GM12878 (cell line): ENCODE measurements at regions of chr12 and their contacts with region 1.

Region 1: DNA sequence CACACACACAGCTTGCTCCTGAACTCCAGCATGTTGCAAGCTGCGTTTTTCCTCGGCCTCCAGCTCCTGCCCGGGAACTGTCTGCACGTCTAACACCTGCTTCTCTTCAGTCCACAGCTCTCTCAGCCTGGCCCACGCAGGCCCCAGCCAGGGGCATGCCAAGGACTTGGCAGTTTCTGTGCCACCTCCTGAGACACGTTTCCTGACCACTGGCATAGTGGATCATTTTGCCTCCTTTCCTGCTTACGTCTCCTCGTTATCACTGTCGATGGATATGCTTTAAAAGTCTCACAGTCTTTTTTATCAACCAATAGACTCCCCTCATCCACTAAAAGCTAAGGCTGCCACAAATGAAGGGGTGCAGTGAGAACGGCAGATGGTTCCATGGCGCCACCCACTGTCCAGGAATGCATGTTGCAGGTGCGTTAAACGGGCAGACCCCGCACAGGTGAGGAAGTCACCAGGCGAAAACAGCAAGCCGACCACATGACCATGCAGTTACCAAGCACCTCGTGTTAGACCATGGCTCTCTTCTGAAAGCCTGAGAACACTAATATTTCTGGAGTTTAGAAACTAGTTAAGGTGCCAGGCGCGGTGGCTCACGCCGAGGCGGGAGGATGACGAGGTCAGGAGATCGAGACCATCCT is 14.7 kb upstream of the TEAD4 start:
- DNase-seq: peak; percentile 15
- ATAC-seq: peak; percentile 89
- H3K4me3 ChIP-seq: no peak overlapping the region
- H3K27ac ChIP-seq: no peak overlapping the region
- H3K4me1 ChIP-seq: no peaks in the 10 kb centered on the region
- H3K27me3 ChIP-seq: no peaks in the 10 kb centered on the region
- CTCF ChIP-seq: peak; percentile 79 to 83 (median 81)
- EP300 ChIP-seq: no peak
- POLR2A ChIP-seq: no peak
- RAD21 ChIP-seq: peak; percentile 76

Region 2: DNA sequence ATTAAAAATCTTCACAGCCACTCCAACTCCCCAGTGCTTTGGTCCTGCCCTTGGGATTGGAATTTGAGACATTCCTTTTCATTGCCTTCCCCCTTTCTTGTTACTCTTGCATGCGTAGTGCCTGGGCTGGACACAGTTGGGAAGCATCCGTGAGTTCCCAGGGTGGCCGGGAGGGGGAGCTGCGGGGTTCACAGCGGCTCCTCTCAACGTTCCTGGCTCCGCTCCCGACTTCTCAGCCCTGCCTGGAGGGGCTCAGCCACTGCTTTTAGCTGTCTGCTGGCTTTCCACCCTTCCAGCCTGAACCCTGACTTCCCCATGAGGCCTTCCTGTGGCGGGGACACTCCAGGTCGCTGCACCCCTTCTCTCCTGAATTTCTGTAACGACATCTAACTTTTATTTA is 90.9 kb before region 1 on chr12:
- CTCF ChIA-PET with region 1: interaction called, 24 read pairs
- POLR2A ChIA-PET with region 1: no interaction called
- RAD21 ChIA-PET with region 1: no interaction called
- SMC1A ChIA-PET with region 1: interaction called, 6 read pairs
- in situ Hi-C with region 1: no loop called
- intact Hi-C with region 1: loop called (anchors 1 kb)
- DNase-seq: no peak
- ATAC-seq: peak; percentile 90
- H3K4me3 ChIP-seq: no peak overlapping the region
- H3K27ac ChIP-seq: no peak overlapping the region
- H3K4me1 ChIP-seq: no peaks in the 10 kb centered on the region
- H3K27me3 ChIP-seq: no peaks in the 10 kb centered on the region
- CTCF ChIP-seq: peak; percentile 54 to 85 (median 68)
- EP300 ChIP-seq: no peak
- POLR2A ChIP-seq: no peak
- RAD21 ChIP-seq: peak; percentile 43

Region 3: DNA sequence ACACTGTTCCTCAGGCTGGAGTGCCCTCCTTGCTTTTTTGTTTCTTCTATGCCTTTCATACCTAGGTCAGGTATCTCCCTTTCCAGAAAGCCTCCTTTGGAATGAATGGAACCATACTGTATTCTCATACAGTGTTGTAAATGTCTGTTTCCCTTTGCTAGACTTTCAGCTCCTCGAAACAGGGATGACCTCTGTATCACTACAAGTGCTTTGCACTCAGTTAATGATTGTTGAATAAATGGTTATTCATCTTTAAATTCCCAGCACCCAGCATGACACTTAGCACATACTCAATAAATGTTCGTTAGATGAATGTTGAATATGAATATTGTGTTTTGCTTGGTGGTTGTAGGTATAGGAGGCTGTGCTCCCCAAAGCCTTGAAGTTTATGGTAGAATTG is 59.7 kb before region 1 on chr12:
- CTCF ChIA-PET with region 1: interaction called, 11 read pairs
- POLR2A ChIA-PET with region 1: no interaction called
- RAD21 ChIA-PET with region 1: interaction called, 10 read pairs
- SMC1A ChIA-PET with region 1: interaction called, 4 read pairs
- in situ Hi-C with region 1: no loop called
- intact Hi-C with region 1: no loop called
- DNase-seq: no peak
- ATAC-seq: peak; percentile 21
- H3K4me3 ChIP-seq: no peak overlapping the region
- H3K27ac ChIP-seq: no peak overlapping the region
- H3K4me1 ChIP-seq: no peaks in the 10 kb centered on the region
- H3K27me3 ChIP-seq: no peaks in the 10 kb centered on the region
- CTCF ChIP-seq: no peak
- EP300 ChIP-seq: no peak
- POLR2A ChIP-seq: no peak
- RAD21 ChIP-seq: no peak

Region 4: DNA sequence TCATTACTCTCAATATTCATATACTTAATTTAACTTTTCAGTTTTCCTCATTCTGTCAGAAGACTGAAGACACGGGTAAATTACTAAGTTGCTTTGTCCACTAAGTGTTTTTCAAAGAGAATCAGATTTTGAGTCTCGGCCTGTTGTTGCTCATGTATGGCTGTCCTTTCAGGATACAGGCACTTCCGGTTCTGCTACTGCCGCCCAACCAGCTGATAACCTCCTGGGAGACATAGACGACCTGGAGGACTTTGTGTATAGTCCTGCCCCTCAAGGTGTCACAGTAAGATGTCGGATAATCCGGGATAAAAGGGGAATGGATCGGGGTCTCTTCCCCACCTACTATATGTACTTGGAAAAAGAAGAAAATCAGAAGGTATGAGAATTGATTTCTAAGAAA is 13.7 kb before region 1 on chr12:
- CTCF ChIA-PET with region 1: interaction called, 11 read pairs
- POLR2A ChIA-PET with region 1: no interaction called
- RAD21 ChIA-PET with region 1: no interaction called
- SMC1A ChIA-PET with region 1: no interaction called
- in situ Hi-C with region 1: no loop called
- intact Hi-C with region 1: no loop called
- DNase-seq: no peak
- ATAC-seq: no peak
- H3K4me3 ChIP-seq: no peak overlapping the region
- H3K27ac ChIP-seq: no peak overlapping the region
- H3K4me1 ChIP-seq: no peaks in the 10 kb centered on the region
- H3K27me3 ChIP-seq: no peaks in the 10 kb centered on the region
- CTCF ChIP-seq: no peak
- EP300 ChIP-seq: no peak
- POLR2A ChIP-seq: no peak
- RAD21 ChIP-seq: no peak